ENCODE measurements at regions of chr16 and their contacts with region 1.

Region 1: DNA sequence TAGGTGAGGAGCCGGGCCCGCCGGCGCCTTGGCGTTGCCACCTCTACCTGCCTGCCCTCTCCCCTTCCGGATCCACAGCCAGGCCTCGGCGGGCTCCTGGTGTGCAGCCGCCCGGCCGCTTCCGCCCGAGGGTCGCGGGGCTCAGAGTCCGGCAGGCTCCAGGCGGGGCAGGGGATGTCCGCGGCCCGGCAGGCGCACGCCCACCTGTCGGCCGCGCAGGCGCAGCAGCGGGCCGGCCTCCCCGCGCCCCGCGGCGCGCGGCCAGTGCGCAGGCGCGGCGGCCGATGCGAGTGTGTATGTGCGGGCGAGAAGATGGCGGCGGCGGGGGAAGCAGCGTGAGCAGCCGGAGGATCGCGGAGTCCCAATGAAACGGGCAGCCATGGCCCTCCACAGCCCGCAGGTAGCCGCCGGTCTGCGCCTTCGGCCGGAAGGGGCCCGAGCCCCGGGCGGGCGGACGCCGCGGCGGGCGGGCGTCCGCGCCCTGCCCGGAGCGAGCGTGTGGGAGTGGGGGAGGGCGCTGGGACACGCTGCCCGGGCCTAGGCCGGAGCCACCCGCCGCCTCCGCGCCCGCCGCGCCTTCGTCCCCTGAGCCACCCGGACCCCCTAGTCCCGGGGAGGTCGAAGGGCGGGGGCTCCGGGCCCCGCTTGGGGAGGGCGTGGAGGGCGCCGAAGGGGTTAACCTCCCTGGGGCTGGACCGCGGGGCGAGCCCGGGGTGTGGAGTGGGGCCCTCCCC is at the start of gene USP10:
- DNase-seq: peak; percentile 89
- ATAC-seq: peak; percentile 98
- H3K4me3 ChIP-seq: peak within 1 kb of the TSS; percentile 70 to 92 (median 88)
- H3K27ac ChIP-seq: peak within 1 kb of the TSS; percentile 93
- H3K4me1 ChIP-seq: peaks cover 49% of the 10 kb centered on the region
- H3K27me3 ChIP-seq: no peaks in the 10 kb centered on the region; a peak in 1 of 5 replicates
- CTCF ChIP-seq: peak; percentile 10; the same call in 1 of the 2 replicates
- EP300 ChIP-seq: peak in 1 of 2 experiments; percentile 44; a peak in 1 of 4 replicates
- POLR2A ChIP-seq: peak; percentile 88 to 93
- RAD21 ChIP-seq: peak; percentile 50; the same call in 1 of the 2 replicates
- total RNA-seq, gene USP10: 79.1 and 97.6 TPM in 2 replicates

Region 2: DNA sequence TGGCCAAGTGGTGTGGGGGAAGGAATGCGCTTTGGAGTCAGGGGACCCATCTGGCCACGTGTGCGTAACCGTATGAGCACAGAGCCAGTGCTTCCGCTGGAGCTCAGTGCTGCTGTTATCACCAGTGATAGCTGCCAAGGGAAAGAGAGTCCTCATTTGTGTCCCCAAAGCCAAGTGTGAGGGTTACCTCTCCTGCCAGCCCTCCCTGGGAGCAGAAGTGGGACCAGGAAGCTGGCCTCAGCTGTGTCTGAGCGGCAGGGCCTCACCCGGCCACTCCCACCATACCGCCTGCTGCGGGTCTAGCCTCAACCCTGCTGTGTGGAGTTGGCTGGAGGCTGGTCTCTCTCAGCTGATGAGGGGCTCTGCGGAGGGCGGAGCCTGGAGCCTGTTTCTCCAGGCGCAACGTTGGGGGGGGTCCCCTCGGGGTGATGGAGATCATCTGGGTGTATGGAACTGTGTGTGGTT is 239.9 kb before region 1 on chr16:
- CTCF ChIA-PET with region 1: no interaction called
- POLR2A ChIA-PET with region 1: no interaction called
- in situ Hi-C with region 1: no loop called
- intact Hi-C with region 1: no loop called
- DNase-seq: no peak
- ATAC-seq: peak; percentile 22; the same call in 2 of the 3 replicates
- H3K4me3 ChIP-seq: no peak overlapping the region
- H3K27ac ChIP-seq: no peak overlapping the region
- H3K4me1 ChIP-seq: no peaks in the 10 kb centered on the region
- H3K27me3 ChIP-seq: no peaks in the 10 kb centered on the region
- CTCF ChIP-seq: no peak
- EP300 ChIP-seq: no peak
- POLR2A ChIP-seq: no peak
- RAD21 ChIP-seq: no peak

Region 3: GRCh38 chr16:84603140-84603816 is 96.6 kb before region 1 on chr16:
- CTCF ChIA-PET with region 1: no interaction called
- POLR2A ChIA-PET with region 1: no interaction called
- in situ Hi-C with region 1: no loop called
- intact Hi-C with region 1: no loop called
- DNase-seq: no peak
- ATAC-seq: no peak
- H3K4me3 ChIP-seq: no peak overlapping the region
- H3K27ac ChIP-seq: no peak overlapping the region
- H3K4me1 ChIP-seq: peaks cover 54% of the 10 kb centered on the region
- H3K27me3 ChIP-seq: no peaks in the 10 kb centered on the region
- CTCF ChIP-seq: no peak
- EP300 ChIP-seq: no peak
- POLR2A ChIP-seq: no peak
- RAD21 ChIP-seq: no peak

Region 4: GRCh38 chr16:84630446-84631152 is 69.3 kb before region 1 on chr16:
- CTCF ChIA-PET with region 1: no interaction called
- POLR2A ChIA-PET with region 1: no interaction called
- in situ Hi-C with region 1: no loop called
- intact Hi-C with region 1: no loop called
- DNase-seq: no peak
- ATAC-seq: no peak
- H3K4me3 ChIP-seq: no peak overlapping the region
- H3K27ac ChIP-seq: no peak overlapping the region
- H3K4me1 ChIP-seq: peaks cover 28% of the 10 kb centered on the region
- H3K27me3 ChIP-seq: peaks cover 1 to 25% of the 10 kb centered on the region in 2 experiments; a peak in 3 of 5 replicates
- CTCF ChIP-seq: no peak
- EP300 ChIP-seq: no peak
- POLR2A ChIP-seq: no peak
- RAD21 ChIP-seq: no peak

Region 5: GRCh38 chr16:84672276-84673202 is 27.3 kb before region 1 on chr16:
- CTCF ChIA-PET with region 1: no interaction called
- POLR2A ChIA-PET with region 1: interaction called, 4 read pairs
- in situ Hi-C with region 1: no loop called
- intact Hi-C with region 1: loop called (anchors 2 kb)
- DNase-seq: peak; percentile 58
- ATAC-seq: peak; percentile 82
- H3K4me3 ChIP-seq: 0 out of 6 replicates have a peak overlapping the region, but pooled peaks of 1 of the 3 experiments have one; percentile 29
- H3K27ac ChIP-seq: no peak overlapping the region
- H3K4me1 ChIP-seq: peaks cover 34% of the 10 kb centered on the region
- H3K27me3 ChIP-seq: 0 out of 5 replicates have a peak, but pooled peaks cover 0 to 21% of the 10 kb centered on the region in 2 experiments
- CTCF ChIP-seq: peak; percentile 95
- EP300 ChIP-seq: no peak
- POLR2A ChIP-seq: no peak
- RAD21 ChIP-seq: peak; percentile 86

Region 6: GRCh38 chr16:84714028-84714427 is 14.1 kb after region 1 on chr16:
- CTCF ChIA-PET with region 1: no interaction called
- POLR2A ChIA-PET with region 1: interaction called, 10 read pairs
- in situ Hi-C with region 1: no loop called
- intact Hi-C with region 1: no loop called
- DNase-seq: no peak
- ATAC-seq: peak; percentile 22
- H3K4me3 ChIP-seq: no peak overlapping the region
- H3K27ac ChIP-seq: peak overlapping the region; percentile 25
- H3K4me1 ChIP-seq: peaks cover 55% of the 10 kb centered on the region
- H3K27me3 ChIP-seq: no peaks in the 10 kb centered on the region
- CTCF ChIP-seq: no peak
- EP300 ChIP-seq: no peak
- POLR2A ChIP-seq: no peak
- RAD21 ChIP-seq: no peak

Region 7: DNA sequence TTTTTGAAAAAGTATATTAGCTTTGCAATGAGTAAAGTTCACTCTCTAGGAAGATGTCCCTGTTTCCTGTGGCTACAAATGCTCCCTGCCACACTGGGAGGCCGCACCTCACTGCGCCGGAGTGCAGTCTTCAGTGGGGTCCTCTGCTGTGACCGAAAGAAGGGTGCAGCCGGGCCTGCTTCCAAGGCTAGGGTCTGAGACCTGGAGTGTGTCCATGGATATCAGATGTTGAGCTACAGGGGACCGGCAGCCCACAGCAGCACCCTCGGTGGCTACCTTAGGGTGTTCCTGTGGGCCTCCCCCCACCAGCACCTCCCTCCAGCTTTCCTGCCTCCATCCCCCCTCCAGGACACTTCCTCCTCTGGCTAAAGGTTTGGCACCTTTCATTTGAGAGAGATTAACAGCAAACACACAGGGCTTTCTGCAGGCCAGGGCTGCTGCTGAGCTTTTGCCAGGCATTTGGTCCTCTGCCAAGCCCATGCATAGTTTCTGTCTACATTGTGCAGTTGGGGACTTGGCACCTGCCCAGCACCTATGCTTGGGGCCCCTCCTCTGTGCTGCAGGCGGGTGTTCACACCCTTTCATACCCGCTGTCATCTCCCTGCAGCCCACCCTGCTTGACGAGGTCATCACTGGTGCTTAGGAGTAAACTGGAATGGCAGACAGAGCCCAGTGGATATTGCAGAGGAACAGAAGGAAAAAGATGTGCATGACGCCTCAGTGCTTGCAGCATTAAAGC is 86.1 kb after region 1 on chr16:
- CTCF ChIA-PET with region 1: no interaction called
- POLR2A ChIA-PET with region 1: no interaction called
- in situ Hi-C with region 1: no loop called
- intact Hi-C with region 1: no loop called
- DNase-seq: peak; percentile 34
- ATAC-seq: peak; percentile 13
- H3K4me3 ChIP-seq: no peak overlapping the region
- H3K27ac ChIP-seq: no peak overlapping the region
- H3K4me1 ChIP-seq: peaks cover 19% of the 10 kb centered on the region; the same call in 1 of the 2 replicates
- H3K27me3 ChIP-seq: no peaks in the 10 kb centered on the region
- CTCF ChIP-seq: no peak
- EP300 ChIP-seq: no peak
- POLR2A ChIP-seq: no peak
- RAD21 ChIP-seq: no peak

Measured in HepG2 (cell line).